Psoas muscle (tissue), 8 donors: ENCODE measurements at regions of chr10 and their contacts with region 1.

Region 1: GRCh38 chr10:80924063-80924952 is 386.6 kb downstream of the SH2D4B start:
- DNase-seq: no peak
- ATAC-seq: no peak
- H3K4me3 ChIP-seq: no peak overlapping the region
- H3K27ac ChIP-seq: no peak overlapping the region
- H3K4me1 ChIP-seq: no peaks in the 10 kb centered on the region
- H3K27me3 ChIP-seq: no peaks in the 10 kb centered on the region
- CTCF ChIP-seq: peak; percentile 53

Region 2: DNA sequence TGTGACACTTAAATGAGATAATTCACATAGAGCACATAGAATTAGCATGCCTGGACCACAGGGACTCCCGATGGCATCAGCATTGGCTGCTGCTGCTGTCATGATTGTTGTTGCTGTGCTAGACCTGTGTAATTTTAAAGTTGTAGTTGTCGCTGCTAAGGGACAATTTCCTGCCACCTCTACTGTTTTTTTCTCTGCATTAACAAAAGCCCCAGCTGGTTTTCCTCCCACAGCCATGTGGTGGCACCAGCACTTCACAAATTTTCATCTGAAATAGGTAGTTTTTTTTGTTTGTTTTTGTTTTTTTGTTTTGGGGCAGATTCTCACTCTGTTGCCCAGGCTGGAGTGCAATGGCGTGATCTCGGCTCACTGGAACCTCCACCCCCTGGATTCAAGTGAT is 541.3 kb before region 1 on chr10:
- intact Hi-C with region 1: loop called in 1 of 2 experiments (anchors 10 kb)
- DNase-seq: peak in 1 of 2 donors; percentile 22
- ATAC-seq: peak in 1 of 4 donors; percentile 53
- H3K4me3 ChIP-seq: no peak overlapping the region
- H3K27ac ChIP-seq: no peak overlapping the region
- H3K4me1 ChIP-seq: no peaks in the 10 kb centered on the region
- H3K27me3 ChIP-seq: no peaks in the 10 kb centered on the region
- CTCF ChIP-seq: peak; percentile 70

Region 3: GRCh38 chr10:80669485-80669884 is 254.8 kb before region 1 on chr10:
- intact Hi-C with region 1: loop called in 1 of 2 experiments (anchors 5 kb)
- DNase-seq: no peak
- ATAC-seq: no peak
- H3K4me3 ChIP-seq: no peak overlapping the region
- H3K27ac ChIP-seq: no peak overlapping the region
- H3K4me1 ChIP-seq: no peaks in the 10 kb centered on the region
- H3K27me3 ChIP-seq: no peaks in the 10 kb centered on the region
- CTCF ChIP-seq: no peak

Region 4: GRCh38 chr10:80699602-80700039 is 224.7 kb before region 1 on chr10:
- intact Hi-C with region 1: loop called in 1 of 2 experiments (anchors 10 kb)
- DNase-seq: peak; percentile 78 to 88
- ATAC-seq: peak in 3 of 4 donors; percentile 57 to 80 (median 61)
- H3K4me3 ChIP-seq: no peak overlapping the region
- H3K27ac ChIP-seq: no peak overlapping the region
- H3K4me1 ChIP-seq: no peaks in the 10 kb centered on the region
- H3K27me3 ChIP-seq: no peaks in the 10 kb centered on the region
- CTCF ChIP-seq: peak; percentile 78

Region 5: DNA sequence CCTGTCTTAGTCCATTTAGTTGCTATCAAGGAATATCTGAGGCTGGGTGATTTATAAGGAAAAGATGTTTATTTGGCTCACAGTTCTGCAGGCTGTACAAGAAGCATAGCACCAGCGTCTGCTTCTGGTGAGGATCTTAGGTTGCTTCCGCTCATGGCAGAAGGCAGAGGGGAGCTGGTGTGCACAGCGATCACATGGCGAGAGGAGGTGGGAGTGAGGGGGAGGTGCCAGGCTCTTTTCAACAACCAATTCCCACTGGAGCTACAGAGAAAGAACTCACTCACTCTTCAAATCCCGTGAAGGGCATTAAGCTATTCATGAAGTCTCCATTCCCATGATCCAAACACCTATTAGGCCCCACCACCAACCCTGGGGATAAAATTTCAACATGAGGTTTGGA is 15.1 kb before region 1 on chr10:
- intact Hi-C with region 1: loop called in 1 of 2 experiments (anchors 1 kb)
- DNase-seq: no peak
- ATAC-seq: no peak
- H3K4me3 ChIP-seq: no peak overlapping the region
- H3K27ac ChIP-seq: no peak overlapping the region
- H3K4me1 ChIP-seq: no peaks in the 10 kb centered on the region
- H3K27me3 ChIP-seq: no peaks in the 10 kb centered on the region
- CTCF ChIP-seq: no peak